GM12878 (cell line): ENCODE measurements at regions of chr13 and their contacts with region 1.

Region 1: GRCh38 chr13:22837980-22838647 is 342.7 kb upstream of the SGCG start:
- DNase-seq: no peak
- ATAC-seq: no peak; the same call in 2 of the 3 replicates
- H3K4me3 ChIP-seq: no peak overlapping the region
- H3K27ac ChIP-seq: no peak overlapping the region
- H3K4me1 ChIP-seq: no peaks in the 10 kb centered on the region
- H3K27me3 ChIP-seq: no peaks in the 10 kb centered on the region
- CTCF ChIP-seq: no peak
- EP300 ChIP-seq: no peak
- POLR2A ChIP-seq: no peak
- RAD21 ChIP-seq: no peak

Region 2: GRCh38 chr13:22828081-22828480 is 10.0 kb before region 1 on chr13:
- CTCF ChIA-PET with region 1: interaction called, 3 read pairs
- POLR2A ChIA-PET with region 1: no interaction called
- RAD21 ChIA-PET with region 1: no interaction called
- SMC1A ChIA-PET with region 1: interaction called, 3 read pairs
- in situ Hi-C with region 1: no loop called
- intact Hi-C with region 1: loop called (anchors 1 kb)
- DNase-seq: no peak
- ATAC-seq: peak; percentile 99
- H3K4me3 ChIP-seq: no peak overlapping the region
- H3K27ac ChIP-seq: no peak overlapping the region
- H3K4me1 ChIP-seq: no peaks in the 10 kb centered on the region
- H3K27me3 ChIP-seq: no peaks in the 10 kb centered on the region
- CTCF ChIP-seq: no peak
- EP300 ChIP-seq: no peak
- POLR2A ChIP-seq: no peak
- RAD21 ChIP-seq: no peak

Region 3: DNA sequence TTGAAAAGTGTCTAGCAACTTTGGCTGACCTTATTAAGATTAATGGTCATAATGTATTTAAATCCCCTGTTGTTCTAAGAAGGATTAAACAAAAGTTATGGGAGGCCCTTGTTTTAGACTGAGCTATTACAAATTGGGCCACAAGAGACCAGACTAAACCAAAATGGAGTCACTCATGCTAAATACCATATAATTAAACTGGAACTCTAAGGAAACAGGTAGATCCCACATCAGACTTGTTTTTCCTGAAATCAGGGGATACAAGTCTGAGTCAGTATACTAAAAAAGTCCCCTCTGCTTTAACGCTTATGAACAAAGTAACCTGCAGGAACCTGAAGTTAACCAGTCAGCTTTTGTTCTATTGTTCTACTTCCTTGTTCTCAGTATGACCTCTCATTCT is 36.7 kb after region 1 on chr13:
- CTCF ChIA-PET with region 1: no interaction called
- POLR2A ChIA-PET with region 1: no interaction called
- RAD21 ChIA-PET with region 1: no interaction called
- SMC1A ChIA-PET with region 1: no interaction called
- in situ Hi-C with region 1: no loop called
- intact Hi-C with region 1: loop called (anchors 5 kb)
- DNase-seq: no peak
- ATAC-seq: peak; percentile 51
- H3K4me3 ChIP-seq: no peak overlapping the region
- H3K27ac ChIP-seq: no peak overlapping the region
- H3K4me1 ChIP-seq: no peaks in the 10 kb centered on the region
- H3K27me3 ChIP-seq: no peaks in the 10 kb centered on the region
- CTCF ChIP-seq: no peak
- EP300 ChIP-seq: no peak
- POLR2A ChIP-seq: no peak
- RAD21 ChIP-seq: no peak

Region 4: GRCh38 chr13:24149306-24149962 is 1311.3 kb after region 1 on chr13:
- CTCF ChIA-PET with region 1: no interaction called
- POLR2A ChIA-PET with region 1: no interaction called
- RAD21 ChIA-PET with region 1: no interaction called
- SMC1A ChIA-PET with region 1: no interaction called
- in situ Hi-C with region 1: no loop called
- intact Hi-C with region 1: no loop called
- DNase-seq: no peak
- ATAC-seq: no peak
- H3K4me3 ChIP-seq: no peak overlapping the region
- H3K27ac ChIP-seq: no peak overlapping the region
- H3K4me1 ChIP-seq: no peaks in the 10 kb centered on the region
- H3K27me3 ChIP-seq: peaks cover 3 to 7% of the 10 kb centered on the region in 2 experiments
- CTCF ChIP-seq: no peak
- EP300 ChIP-seq: no peak
- POLR2A ChIP-seq: no peak
- RAD21 ChIP-seq: no peak